ENCODE measurements at regions of chr4 and their contacts with region 1.

Region 1: GRCh38 chr4:38023347-38024205 is 63.4 kb downstream of the PTTG2 start:
- DNase-seq: no peak
- H3K4me3 ChIP-seq: peak overlapping the region in 5 of 8 donors; percentile 0 to 50 (median 21)
- H3K27ac ChIP-seq: peak overlapping the region in 7 of 8 donors; percentile 13 to 73 (median 47)
- H3K4me1 ChIP-seq: peaks cover 0 to 27% (median 11%) of the 10 kb centered on the region in 6 donors
- H3K27me3 ChIP-seq: no peaks in the 10 kb centered on the region
- CTCF ChIP-seq: no peak
- POLR2A ChIP-seq: no peak

Region 2: DNA sequence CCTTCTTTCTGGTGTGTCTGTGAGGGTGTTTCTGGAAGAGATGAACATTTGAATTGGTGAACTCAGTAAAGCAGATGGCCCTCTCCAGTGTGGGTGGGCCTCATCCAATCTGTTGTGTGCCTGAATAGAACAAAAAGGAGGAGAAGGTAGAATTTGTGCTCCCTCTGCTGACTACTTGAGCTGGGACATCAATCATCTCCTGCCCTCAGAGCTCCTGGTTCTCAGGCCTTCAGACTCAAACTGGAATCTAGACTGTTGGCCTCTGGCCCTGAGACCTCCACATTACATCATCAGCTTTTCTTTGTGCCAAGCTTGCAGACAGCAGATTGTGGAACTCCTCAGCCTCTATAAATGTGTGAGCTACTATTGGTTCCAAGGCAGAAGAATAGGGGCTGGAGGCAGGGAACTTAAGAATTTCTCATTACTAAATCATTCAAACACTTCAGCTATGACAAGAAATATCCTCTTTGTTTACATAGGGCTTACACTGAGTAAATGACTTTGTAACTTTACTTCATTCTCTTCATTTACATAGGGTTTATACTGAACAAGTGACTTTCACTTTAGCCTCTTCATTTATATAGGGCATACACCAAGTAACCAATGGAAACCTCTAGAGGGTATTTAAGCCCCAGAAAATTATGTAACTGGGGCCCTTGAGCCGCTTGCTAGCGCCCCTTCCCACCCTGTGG is 866.0 kb before region 1 on chr4:
- intact Hi-C with region 1: no loop called
- DNase-seq: no peak
- H3K4me3 ChIP-seq: no peak overlapping the region
- H3K27ac ChIP-seq: no peak overlapping the region
- H3K4me1 ChIP-seq: no peaks in the 10 kb centered on the region
- H3K27me3 ChIP-seq: no peaks in the 10 kb centered on the region
- CTCF ChIP-seq: no peak
- POLR2A ChIP-seq: no peak

Region 3: GRCh38 chr4:37503261-37503660 is 520.3 kb before region 1 on chr4:
- intact Hi-C with region 1: no loop called
- DNase-seq: no peak
- H3K4me3 ChIP-seq: no peak overlapping the region
- H3K27ac ChIP-seq: no peak overlapping the region
- H3K4me1 ChIP-seq: no peaks in the 10 kb centered on the region
- H3K27me3 ChIP-seq: peaks cover 0 to 12% (median 0%) of the 10 kb centered on the region in 7 donors
- CTCF ChIP-seq: no peak
- POLR2A ChIP-seq: no peak

Region 4: GRCh38 chr4:37889849-37890800 is 133.5 kb before region 1 on chr4:
- intact Hi-C with region 1: loop called (anchors 10 kb)
- DNase-seq: peak; percentile 80
- H3K4me3 ChIP-seq: peak overlapping the region; percentile 67 to 98 (median 92)
- H3K27ac ChIP-seq: peak overlapping the region; percentile 71 to 97 (median 94)
- H3K4me1 ChIP-seq: peaks cover 10 to 62% (median 36%) of the 10 kb centered on the region in 6 donors
- H3K27me3 ChIP-seq: no peaks in the 10 kb centered on the region
- CTCF ChIP-seq: peak in 5 of 11 experiments; percentile 13 to 39 (median 28)
- POLR2A ChIP-seq: no peak

Region 5: GRCh38 chr4:37977471-37978247 is 45.9 kb before region 1 on chr4:
- intact Hi-C with region 1: loop called (anchors 10 kb)
- DNase-seq: peak; percentile 97
- H3K4me3 ChIP-seq: peak overlapping the region; percentile 69 to 94 (median 78)
- H3K27ac ChIP-seq: peak overlapping the region; percentile 91 to 99 (median 96)
- H3K4me1 ChIP-seq: peaks cover 17 to 58% (median 46%) of the 10 kb centered on the region in 6 donors
- H3K27me3 ChIP-seq: no peaks in the 10 kb centered on the region
- CTCF ChIP-seq: peak; percentile 48 to 93 (median 76)
- POLR2A ChIP-seq: no peak

Region 6: GRCh38 chr4:38154681-38155608 is 131.4 kb after region 1 on chr4:
- intact Hi-C with region 1: no loop called
- DNase-seq: no peak
- H3K4me3 ChIP-seq: no peak overlapping the region
- H3K27ac ChIP-seq: peak overlapping the region in 4 of 8 donors; percentile 7 to 70 (median 47)
- H3K4me1 ChIP-seq: peaks cover 0 to 24% (median 15%) of the 10 kb centered on the region in 6 donors
- H3K27me3 ChIP-seq: no peaks in the 10 kb centered on the region
- CTCF ChIP-seq: no peak
- POLR2A ChIP-seq: no peak

Measured in spleen (tissue), 13 donors.